ENCODE measurements at regions of chr2 and their contacts with region 1.

Region 1: GRCh38 chr2:15939854-15940660 is at the start of gene MYCN:
- DNase-seq: peak; percentile 9
- H3K4me3 ChIP-seq: peak within 1 kb of the TSS; percentile 28 to 35
- H3K27ac ChIP-seq: no peak within 1 kb of the TSS
- H3K4me1 ChIP-seq: peaks cover 14% of the 10 kb centered on the region
- H3K27me3 ChIP-seq: peaks cover 3% of the 10 kb centered on the region
- CTCF ChIP-seq: peak in 3 of 4 experiments; percentile 16 to 78 (median 52)
- POLR2A ChIP-seq: no peak
- total RNA-seq, gene MYCN: 0.14 to 3.5 TPM

Region 2: DNA sequence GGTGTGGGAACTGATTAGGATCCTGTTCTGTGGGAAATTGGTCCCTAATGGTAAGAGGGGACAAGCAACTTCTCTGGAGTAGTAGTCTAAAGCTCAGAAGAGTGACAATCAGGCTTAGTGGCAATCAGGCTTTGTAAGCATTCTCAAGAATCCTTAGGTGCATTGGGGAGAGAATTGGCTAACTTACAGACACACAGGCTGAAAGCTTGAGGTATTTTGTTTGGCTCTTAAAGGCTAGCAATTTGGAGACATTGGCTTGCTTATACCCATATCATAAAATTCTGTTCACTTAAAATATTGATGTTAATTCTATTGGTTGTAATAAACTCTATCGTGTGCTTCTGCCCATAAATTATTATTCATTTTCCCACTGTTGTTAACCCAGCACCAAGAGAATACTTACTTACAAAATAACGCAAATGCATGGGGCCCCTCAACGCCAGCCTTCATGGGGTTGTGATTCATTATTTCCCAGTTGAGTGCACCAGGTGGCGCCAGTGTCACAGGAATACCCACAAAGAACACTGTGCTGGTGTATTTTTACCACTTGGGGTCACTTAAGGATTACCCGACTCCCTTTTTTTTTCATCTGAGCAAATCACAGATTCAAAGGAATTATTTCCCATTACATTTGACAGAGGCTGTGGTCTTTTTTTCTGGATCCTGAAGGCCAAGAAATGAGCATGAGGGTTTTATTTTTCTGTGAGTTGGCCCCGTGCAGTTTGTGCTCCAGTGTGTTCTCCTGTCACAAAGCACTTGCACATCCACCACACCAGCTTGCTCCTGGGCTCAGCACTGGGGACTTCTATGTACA is 302.9 kb before region 1 on chr2:
- intact Hi-C with region 1: loop called (anchors 10 kb)
- DNase-seq: peak; percentile 69
- H3K4me3 ChIP-seq: no peak overlapping the region
- H3K27ac ChIP-seq: no peak overlapping the region
- H3K4me1 ChIP-seq: no peaks in the 10 kb centered on the region
- H3K27me3 ChIP-seq: no peaks in the 10 kb centered on the region
- CTCF ChIP-seq: peak; percentile 50 to 91 (median 88)
- POLR2A ChIP-seq: no peak

Region 3: GRCh38 chr2:15993232-15993610 is 53.2 kb after region 1 on chr2:
- intact Hi-C with region 1: no loop called
- DNase-seq: no peak
- H3K4me3 ChIP-seq: no peak overlapping the region
- H3K27ac ChIP-seq: no peak overlapping the region
- H3K4me1 ChIP-seq: peaks cover 3% of the 10 kb centered on the region
- H3K27me3 ChIP-seq: no peaks in the 10 kb centered on the region
- CTCF ChIP-seq: no peak
- POLR2A ChIP-seq: no peak

Region 4: DNA sequence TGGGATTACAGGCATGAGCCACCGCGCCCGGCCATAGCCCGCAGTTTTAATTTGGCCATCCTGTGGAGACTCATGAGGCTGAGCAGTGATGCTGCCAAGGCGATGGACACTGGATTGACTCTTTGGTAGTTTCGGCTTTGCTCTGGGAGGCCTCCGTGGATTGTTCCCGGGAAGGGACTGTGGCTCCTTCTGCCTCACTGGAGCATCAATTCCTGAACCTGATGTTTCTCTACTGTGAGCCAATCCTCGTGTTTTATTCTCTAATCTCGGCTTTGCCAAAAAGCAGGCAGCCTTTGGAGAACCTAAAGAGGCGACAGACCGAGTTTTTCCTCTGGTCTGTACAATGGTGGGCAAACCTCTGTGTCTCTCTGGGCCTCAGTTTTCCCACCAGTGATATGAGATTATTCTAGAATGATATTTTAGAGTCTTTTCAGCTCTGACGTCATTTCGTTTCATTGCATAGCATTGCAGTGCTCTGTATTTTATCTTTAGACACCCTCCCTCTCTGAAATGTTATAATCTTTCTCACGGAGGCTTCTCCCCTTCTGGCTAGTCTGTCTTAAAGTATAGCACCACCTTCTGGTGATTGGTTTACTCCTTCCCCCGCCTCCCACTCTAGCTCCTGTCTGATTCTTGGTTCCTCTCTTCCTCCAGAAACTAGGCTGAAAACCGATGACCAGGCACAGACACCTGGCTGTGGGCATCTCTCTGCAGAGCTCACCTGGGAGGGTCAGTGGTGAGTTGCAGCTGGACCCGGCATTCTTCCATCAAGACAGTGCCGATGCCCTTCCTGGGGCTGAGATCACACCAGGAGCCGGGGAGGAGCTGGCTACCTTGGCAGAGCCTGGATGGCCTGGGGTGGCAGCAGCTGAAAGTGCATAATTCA is 341.6 kb after region 1 on chr2:
- intact Hi-C with region 1: loop called (anchors 5 kb)
- DNase-seq: peak; percentile 21
- H3K4me3 ChIP-seq: no peak overlapping the region
- H3K27ac ChIP-seq: no peak overlapping the region
- H3K4me1 ChIP-seq: no peaks in the 10 kb centered on the region
- H3K27me3 ChIP-seq: no peaks in the 10 kb centered on the region
- CTCF ChIP-seq: peak in 3 of 4 experiments; percentile 45 to 49 (median 46)
- POLR2A ChIP-seq: no peak

Region 5: DNA sequence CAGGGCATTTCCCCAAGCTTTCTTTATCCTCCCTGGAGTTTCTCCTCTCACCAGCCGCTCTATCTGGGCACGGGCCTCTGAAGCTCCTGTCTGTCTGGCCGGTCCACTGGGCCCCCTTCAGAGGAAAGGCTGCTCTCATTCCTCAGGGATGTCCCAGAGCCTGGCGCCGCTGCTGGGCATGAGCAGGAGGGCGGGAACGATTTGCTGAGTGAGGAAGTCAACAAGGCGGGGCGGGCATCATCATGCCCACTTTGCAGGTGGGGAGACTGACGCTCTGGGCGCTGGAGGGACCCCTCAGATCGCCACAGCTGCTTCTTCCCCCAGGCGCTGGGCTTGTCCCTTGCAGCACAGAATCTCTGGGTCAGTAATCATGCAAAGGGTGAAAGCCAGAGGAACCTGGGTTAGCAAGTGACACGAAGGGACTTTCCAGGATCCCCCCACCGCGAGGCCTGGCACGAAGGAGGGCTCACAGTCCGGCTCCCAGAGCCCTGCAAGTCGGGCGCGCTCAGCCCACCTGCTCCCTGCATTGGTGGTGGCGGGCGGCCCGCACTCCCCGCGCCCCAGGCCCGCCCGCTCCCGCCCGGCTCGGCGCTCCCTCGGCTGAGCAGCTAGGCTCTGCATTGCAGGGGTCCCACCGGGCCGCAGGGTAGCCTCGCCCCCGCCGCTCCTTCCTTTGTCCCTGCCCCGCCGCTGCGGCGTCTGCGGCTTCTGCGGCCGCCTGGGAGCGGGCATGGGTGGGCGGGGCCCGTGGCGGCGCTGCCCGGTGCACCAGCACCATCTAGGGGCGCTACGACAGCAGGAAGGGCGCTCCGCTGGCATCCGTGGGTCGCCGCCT is 567.8 kb after region 1 on chr2:
- intact Hi-C with region 1: loop called (anchors 2 kb)
- DNase-seq: peak; percentile 12
- H3K4me3 ChIP-seq: peak overlapping the region; percentile 15 to 28
- H3K27ac ChIP-seq: no peak overlapping the region
- H3K4me1 ChIP-seq: no peaks in the 10 kb centered on the region
- H3K27me3 ChIP-seq: peaks cover 3% of the 10 kb centered on the region
- CTCF ChIP-seq: peak in 3 of 4 experiments; percentile 41 to 68 (median 65)
- POLR2A ChIP-seq: no peak

Region 6: DNA sequence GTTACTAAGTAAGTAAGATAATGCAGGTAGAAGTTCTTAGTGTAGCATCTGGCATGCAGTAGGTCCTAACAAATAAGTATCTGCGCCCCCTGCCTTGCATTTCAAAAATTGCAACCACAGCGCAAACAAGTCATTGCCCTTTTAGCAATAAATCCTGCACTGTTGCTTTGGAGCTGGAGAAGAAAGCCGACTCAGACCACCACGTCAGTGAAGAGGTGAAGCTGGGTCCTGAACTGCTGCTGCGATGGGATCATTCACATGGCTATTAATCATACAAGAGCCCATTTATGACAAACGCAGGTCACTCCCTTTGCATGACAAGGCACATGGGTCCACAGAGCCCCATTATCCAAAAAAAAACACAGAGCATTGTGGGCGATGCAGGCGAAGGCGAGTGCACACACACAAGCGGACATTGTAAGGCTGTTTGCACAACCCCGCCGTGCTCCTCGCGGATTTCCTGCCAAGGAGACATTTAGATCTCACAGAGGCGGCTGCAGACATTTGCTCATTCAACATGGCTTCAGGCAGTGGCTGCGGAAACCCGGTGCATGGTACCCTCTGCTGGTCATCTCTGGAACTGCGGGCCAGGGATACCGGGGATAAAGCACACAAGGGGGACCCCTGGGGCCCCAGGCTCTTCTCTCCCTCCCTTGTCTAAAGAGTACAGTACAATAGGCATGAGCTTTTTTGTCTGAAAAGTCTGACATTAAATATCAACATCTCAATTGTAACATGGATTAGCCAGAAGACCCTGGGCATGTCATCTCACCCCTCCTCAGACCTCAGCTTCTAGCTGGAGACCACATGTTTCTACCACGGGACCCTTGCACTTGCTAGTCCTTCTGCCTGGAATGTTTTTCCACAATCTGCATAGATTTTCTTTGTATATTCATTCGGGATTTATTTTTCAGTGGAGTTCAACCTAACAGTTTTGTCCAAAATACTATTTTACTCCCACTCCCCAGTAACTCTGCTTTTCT is 668.9 kb after region 1 on chr2:
- intact Hi-C with region 1: loop called (anchors 10 kb)
- DNase-seq: peak; percentile 67
- H3K4me3 ChIP-seq: peak overlapping the region; percentile 17 to 29
- H3K27ac ChIP-seq: no peak overlapping the region
- H3K4me1 ChIP-seq: no peaks in the 10 kb centered on the region
- H3K27me3 ChIP-seq: no peaks in the 10 kb centered on the region
- CTCF ChIP-seq: peak; percentile 80 to 92 (median 91)
- POLR2A ChIP-seq: no peak

Measured in prostate gland (tissue), 2 donors.